Caco-2 (cell line): ENCODE measurements at regions of chr2 and their contacts with region 1.

Region 1: DNA sequence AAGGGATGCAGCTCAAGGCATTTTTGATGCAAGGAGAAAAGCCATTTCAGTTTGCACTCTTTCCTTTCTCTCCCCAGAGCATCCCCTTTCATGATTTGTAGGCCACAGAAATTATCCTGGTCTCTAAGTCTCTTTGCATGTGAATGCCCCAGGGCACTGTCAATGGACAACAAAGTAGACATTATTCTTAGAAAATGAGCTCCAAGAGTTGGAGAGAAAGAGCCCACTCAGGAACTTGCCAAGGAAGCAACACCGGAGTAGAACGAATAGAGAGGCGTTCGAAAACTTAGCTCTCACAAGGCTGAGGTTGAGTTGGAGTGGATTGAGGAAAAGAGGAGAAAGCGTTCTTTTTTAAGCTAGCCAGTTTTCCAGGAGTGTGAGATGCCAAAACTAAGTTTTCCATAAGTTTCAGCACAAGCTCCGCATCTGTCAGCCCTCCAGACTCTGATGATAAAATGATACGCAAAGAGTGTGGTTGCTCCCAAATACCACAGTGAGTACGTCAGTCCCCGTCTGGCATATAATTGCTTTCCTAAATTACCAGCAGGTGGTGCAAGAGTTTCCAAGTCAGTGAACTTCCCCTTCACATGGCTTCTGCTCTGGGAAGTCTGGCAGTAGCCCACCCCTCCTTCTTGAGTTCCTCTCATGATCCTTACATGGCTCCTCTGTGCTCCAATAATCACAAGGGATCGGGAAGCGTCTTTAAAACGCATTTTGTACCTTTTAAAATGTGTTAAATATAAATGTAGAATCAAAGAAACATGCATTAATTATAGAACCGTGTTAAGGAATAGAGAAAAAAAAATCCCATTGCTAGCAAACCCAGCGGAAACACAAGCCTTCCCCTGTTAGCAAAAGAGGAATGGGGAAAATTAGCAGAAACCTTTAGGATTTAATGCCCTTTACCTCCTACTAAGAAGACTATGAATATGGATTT is 1060.6 kb upstream of the FANCL start:
- DNase-seq: peak; percentile 56 to 64
- H3K4me3 ChIP-seq: no peak overlapping the region
- H3K4me3 Mint-ChIP-seq: no peak overlapping the region
- H3K27ac Mint-ChIP-seq: no peak overlapping the region
- H3K4me1 ChIP-seq: no peaks in the 10 kb centered on the region
- H3K4me1 Mint-ChIP-seq: no peaks in the 10 kb centered on the region
- H3K27me3 ChIP-seq: no peaks in the 10 kb centered on the region
- H3K27me3 Mint-ChIP-seq: peaks cover 3% of the 10 kb centered on the region
- CTCF ChIP-seq: peak; percentile 47 to 66

Region 2: DNA sequence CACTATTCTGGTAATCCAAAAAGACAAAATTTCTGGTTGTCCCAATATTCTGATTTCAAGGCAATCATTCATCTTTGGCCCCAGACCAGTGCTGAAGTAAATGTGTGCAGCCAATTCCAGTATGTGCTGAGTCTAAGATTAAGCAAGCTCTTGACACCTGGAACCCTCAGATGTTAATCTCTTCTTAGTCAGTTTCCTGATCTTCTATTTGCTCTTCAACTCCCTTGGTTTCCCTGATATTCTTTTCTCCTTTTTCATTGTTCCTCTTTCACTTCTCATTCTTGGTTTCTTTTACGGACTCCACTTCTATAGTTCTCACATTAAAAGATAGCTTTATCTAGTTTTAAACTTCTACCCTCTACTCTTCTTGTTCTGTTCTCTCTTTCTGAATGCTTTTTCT is 615.0 kb before region 1 on chr2:
- CTCF ChIA-PET with region 1: no interaction called
- POLR2A ChIA-PET with region 1: no interaction called
- intact Hi-C with region 1: no loop called
- DNase-seq: no peak
- H3K4me3 ChIP-seq: no peak overlapping the region
- H3K4me3 Mint-ChIP-seq: no peak overlapping the region
- H3K27ac Mint-ChIP-seq: no peak overlapping the region
- H3K4me1 ChIP-seq: no peaks in the 10 kb centered on the region
- H3K4me1 Mint-ChIP-seq: no peaks in the 10 kb centered on the region
- H3K27me3 ChIP-seq: no peaks in the 10 kb centered on the region
- H3K27me3 Mint-ChIP-seq: peaks cover 3% of the 10 kb centered on the region
- CTCF ChIP-seq: no peak

Region 3: DNA sequence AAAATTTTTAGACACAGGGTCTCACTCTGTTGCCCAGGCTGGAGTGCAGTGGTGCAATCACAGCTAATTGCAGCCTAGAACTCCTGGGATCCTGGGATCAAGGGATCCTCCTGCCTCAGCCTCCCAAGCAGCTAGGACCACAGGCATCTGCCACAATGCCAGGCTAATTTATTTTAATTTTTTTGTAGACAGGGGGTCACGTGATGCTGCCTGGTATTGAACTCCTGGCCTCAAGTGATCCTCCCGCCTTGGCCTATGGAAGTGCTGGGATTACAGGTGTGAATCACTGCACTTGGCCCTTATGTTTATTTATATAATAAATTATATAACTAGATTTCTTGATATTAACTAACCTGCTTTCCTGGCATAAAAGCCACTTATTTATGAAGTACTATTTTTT is 21.1 kb after region 1 on chr2:
- CTCF ChIA-PET with region 1: no interaction called
- POLR2A ChIA-PET with region 1: no interaction called
- intact Hi-C with region 1: no loop called
- DNase-seq: no peak
- H3K4me3 ChIP-seq: no peak overlapping the region
- H3K4me3 Mint-ChIP-seq: no peak overlapping the region
- H3K27ac Mint-ChIP-seq: no peak overlapping the region
- H3K4me1 ChIP-seq: no peaks in the 10 kb centered on the region
- H3K4me1 Mint-ChIP-seq: no peaks in the 10 kb centered on the region
- H3K27me3 ChIP-seq: no peaks in the 10 kb centered on the region
- H3K27me3 Mint-ChIP-seq: peaks cover 6% of the 10 kb centered on the region
- CTCF ChIP-seq: no peak

Region 4: DNA sequence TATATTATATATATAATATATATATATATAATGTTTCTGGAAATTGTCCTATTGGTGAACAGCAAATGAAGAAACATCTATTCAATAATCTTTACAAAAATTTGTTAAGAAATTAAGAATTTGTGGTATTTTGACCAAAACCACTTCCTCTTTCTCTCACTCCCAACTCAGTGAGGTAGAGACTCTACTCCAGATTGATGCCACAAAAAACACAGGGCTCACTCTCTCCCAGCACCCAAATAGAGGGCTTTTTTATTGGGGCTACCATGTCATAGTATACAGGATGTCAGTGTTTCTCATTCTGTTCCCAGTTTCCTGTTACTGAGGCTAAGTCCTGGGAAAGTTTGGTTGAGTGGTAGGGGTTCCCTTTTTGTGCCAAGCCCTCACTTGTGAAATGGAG is 96.3 kb after region 1 on chr2:
- CTCF ChIA-PET with region 1: no interaction called
- POLR2A ChIA-PET with region 1: no interaction called
- intact Hi-C with region 1: no loop called
- DNase-seq: no peak
- H3K4me3 ChIP-seq: no peak overlapping the region
- H3K4me3 Mint-ChIP-seq: no peak overlapping the region
- H3K27ac Mint-ChIP-seq: no peak overlapping the region
- H3K4me1 ChIP-seq: no peaks in the 10 kb centered on the region
- H3K4me1 Mint-ChIP-seq: no peaks in the 10 kb centered on the region
- H3K27me3 ChIP-seq: no peaks in the 10 kb centered on the region
- H3K27me3 Mint-ChIP-seq: no peaks in the 10 kb centered on the region
- CTCF ChIP-seq: no peak

Region 5: GRCh38 chr2:59584958-59585357 is 283.2 kb after region 1 on chr2:
- CTCF ChIA-PET with region 1: no interaction called
- POLR2A ChIA-PET with region 1: no interaction called
- intact Hi-C with region 1: loop called (anchors 2 kb)
- DNase-seq: peak; percentile 35 to 37
- H3K4me3 ChIP-seq: no peak overlapping the region
- H3K4me3 Mint-ChIP-seq: no peak overlapping the region
- H3K27ac Mint-ChIP-seq: no peak overlapping the region
- H3K4me1 ChIP-seq: no peaks in the 10 kb centered on the region
- H3K4me1 Mint-ChIP-seq: no peaks in the 10 kb centered on the region
- H3K27me3 ChIP-seq: no peaks in the 10 kb centered on the region
- H3K27me3 Mint-ChIP-seq: no peaks in the 10 kb centered on the region
- CTCF ChIP-seq: peak; percentile 44 to 53